Endothelial cell of umbilical vein (primary cell): ENCODE measurements at regions of chr16 and their contacts with region 1.

Region 1: GRCh38 chr16:81095953-81096717 is at the start of gene GCSH:
- DNase-seq: peak; percentile 99
- H3K4me3 ChIP-seq: peak within 1 kb of the TSS; percentile 49 to 80 (median 60)
- H3K27ac ChIP-seq: peak within 1 kb of the TSS; percentile 0
- H3K4me1 ChIP-seq: peaks cover 7% of the 10 kb centered on the region
- H3K27me3 ChIP-seq: peaks cover 0 to 4% of the 10 kb centered on the region in 2 experiments
- CTCF ChIP-seq: no peak
- POLR2A ChIP-seq: peak; percentile 57
- total RNA-seq, gene GCSH: 31.1 and 33.1 TPM in 2 replicates

Region 2: GRCh38 chr16:80623356-80623755 is 472.8 kb before region 1 on chr16:
- CTCF ChIA-PET with region 1: no interaction called
- POLR2A ChIA-PET with region 1: no interaction called
- dilution Hi-C with region 1: no loop called
- intact Hi-C with region 1: no loop called
- DNase-seq: peak; percentile 84
- H3K4me3 ChIP-seq: no peak overlapping the region
- H3K27ac ChIP-seq: no peak overlapping the region
- H3K4me1 ChIP-seq: peaks cover 12% of the 10 kb centered on the region
- H3K27me3 ChIP-seq: no peaks in the 10 kb centered on the region
- CTCF ChIP-seq: no peak
- POLR2A ChIP-seq: no peak

Region 3: GRCh38 chr16:81006814-81007696 is 89.1 kb before region 1 on chr16 and contains the starts of genes CENPN and CMC2:
- CTCF ChIA-PET with region 1: no interaction called
- POLR2A ChIA-PET with region 1: no interaction called
- dilution Hi-C with region 1: no loop called
- intact Hi-C with region 1: loop called (anchors 1 kb)
- DNase-seq: peak; percentile 99
- H3K4me3 ChIP-seq: peak within 1 kb of the TSS; percentile 72 to 87 (median 83)
- H3K27ac ChIP-seq: peak within 1 kb of the TSS; percentile 80
- H3K4me1 ChIP-seq: peaks cover 19% of the 10 kb centered on the region
- H3K27me3 ChIP-seq: no peaks in the 10 kb centered on the region
- CTCF ChIP-seq: peak in 1 of 2 donors; percentile 1
- POLR2A ChIP-seq: peak; percentile 84
- total RNA-seq, gene CENPN: 52.4 and 53.4 TPM in 2 replicates
- total RNA-seq, gene CMC2: 96.6 and 97.8 TPM in 2 replicates

Region 4: GRCh38 chr16:81077076-81077940 is 18.8 kb before region 1 on chr16 and contains the start of gene C16orf46:
- CTCF ChIA-PET with region 1: interaction called, 3 read pairs
- POLR2A ChIA-PET with region 1: interaction called, 7 read pairs
- dilution Hi-C with region 1: no loop called
- intact Hi-C with region 1: loop called (anchors 1 kb)
- DNase-seq: peak; percentile 97
- H3K4me3 ChIP-seq: peak within 1 kb of the TSS; percentile 48 to 52 (median 49)
- H3K27ac ChIP-seq: peak within 1 kb of the TSS; percentile 91
- H3K4me1 ChIP-seq: peaks cover 7% of the 10 kb centered on the region
- H3K27me3 ChIP-seq: no peaks in the 10 kb centered on the region
- CTCF ChIP-seq: no peak
- POLR2A ChIP-seq: peak; percentile 80
- total RNA-seq, gene C16orf46: 0.53 TPM in 1 of 2 replicates, not detected in the other

Region 5: GRCh38 chr16:81181013-81181720 is 85.0 kb after region 1 on chr16:
- CTCF ChIA-PET with region 1: no interaction called
- POLR2A ChIA-PET with region 1: no interaction called
- dilution Hi-C with region 1: no loop called
- intact Hi-C with region 1: loop called (anchors 1 kb)
- DNase-seq: peak; percentile 77
- H3K4me3 ChIP-seq: no peak overlapping the region
- H3K27ac ChIP-seq: peak overlapping the region; percentile 18
- H3K4me1 ChIP-seq: no peaks in the 10 kb centered on the region
- H3K27me3 ChIP-seq: no peaks in the 10 kb centered on the region
- CTCF ChIP-seq: no peak
- POLR2A ChIP-seq: no peak

Region 6: DNA sequence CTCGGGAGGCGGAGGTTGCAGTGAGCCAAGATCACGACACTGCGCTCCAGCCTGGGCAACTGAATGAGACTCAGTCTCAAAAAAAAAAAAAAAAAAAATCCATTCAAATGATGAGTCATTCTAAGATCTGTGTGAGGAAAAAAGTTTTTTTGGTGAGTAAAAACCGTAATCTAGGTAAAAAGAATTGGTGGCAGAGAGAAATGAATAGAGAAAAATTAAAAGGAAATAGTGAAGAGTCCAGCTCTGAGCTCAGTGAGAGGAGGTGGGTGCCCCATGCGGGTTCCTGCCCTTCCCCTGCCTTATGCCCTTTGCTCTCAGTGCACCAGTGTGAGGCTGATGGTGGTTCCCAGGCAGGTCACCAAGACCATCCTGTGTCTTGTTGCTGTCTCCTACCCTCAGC is 239.5 kb after region 1 on chr16:
- CTCF ChIA-PET with region 1: no interaction called
- POLR2A ChIA-PET with region 1: no interaction called
- dilution Hi-C with region 1: no loop called
- intact Hi-C with region 1: no loop called
- DNase-seq: no peak
- H3K4me3 ChIP-seq: no peak overlapping the region
- H3K27ac ChIP-seq: no peak overlapping the region
- H3K4me1 ChIP-seq: peaks cover 4% of the 10 kb centered on the region
- H3K27me3 ChIP-seq: no peaks in the 10 kb centered on the region
- CTCF ChIP-seq: no peak
- POLR2A ChIP-seq: no peak